Colonic mucosa (tissue), 4 donors: ENCODE measurements at regions of chr1 and their contacts with region 1.

Region 1: DNA sequence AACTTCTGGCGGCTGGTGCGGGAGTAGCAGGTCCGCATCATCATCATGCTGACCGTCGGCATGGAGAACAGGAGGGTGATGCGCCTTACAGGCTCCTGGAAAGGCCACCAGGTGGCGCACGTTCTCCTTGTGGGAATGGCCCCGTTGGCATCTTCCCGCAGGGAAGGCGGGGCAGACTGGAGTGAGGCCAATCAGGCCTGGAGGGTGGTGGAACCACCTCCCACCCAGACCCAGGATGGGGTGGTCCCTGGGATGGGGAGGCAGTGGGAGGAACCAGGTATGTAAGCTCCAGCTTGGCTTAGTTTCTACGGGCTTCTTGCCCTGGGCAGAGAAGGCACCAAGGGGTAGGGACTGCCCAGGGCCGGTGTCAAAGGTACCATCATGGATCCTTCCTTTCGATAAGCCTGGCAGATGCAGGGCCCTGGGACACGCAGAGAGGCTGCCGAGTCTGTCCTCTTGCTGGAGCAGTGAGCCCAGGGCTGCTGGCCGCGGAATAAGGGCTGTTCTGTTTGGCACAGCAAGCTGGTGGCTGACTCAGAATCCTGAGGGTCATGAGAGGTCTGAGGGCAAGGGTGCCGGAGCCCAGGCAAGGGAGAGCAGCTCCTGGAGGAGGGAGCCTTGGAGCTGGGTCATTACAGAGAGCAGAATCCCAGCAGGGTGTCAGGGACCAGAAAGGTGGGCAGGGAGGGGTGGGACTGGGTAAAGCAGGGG is 8.7 kb upstream of the LGR6 start:
- DNase-seq: peak; percentile 89
- H3K4me3 ChIP-seq: no peak overlapping the region
- H3K27ac ChIP-seq: no peak overlapping the region
- H3K4me1 ChIP-seq: no peaks in the 10 kb centered on the region
- H3K27me3 ChIP-seq: no peaks in the 10 kb centered on the region
- CTCF ChIP-seq: peak; percentile 89

Region 2: DNA sequence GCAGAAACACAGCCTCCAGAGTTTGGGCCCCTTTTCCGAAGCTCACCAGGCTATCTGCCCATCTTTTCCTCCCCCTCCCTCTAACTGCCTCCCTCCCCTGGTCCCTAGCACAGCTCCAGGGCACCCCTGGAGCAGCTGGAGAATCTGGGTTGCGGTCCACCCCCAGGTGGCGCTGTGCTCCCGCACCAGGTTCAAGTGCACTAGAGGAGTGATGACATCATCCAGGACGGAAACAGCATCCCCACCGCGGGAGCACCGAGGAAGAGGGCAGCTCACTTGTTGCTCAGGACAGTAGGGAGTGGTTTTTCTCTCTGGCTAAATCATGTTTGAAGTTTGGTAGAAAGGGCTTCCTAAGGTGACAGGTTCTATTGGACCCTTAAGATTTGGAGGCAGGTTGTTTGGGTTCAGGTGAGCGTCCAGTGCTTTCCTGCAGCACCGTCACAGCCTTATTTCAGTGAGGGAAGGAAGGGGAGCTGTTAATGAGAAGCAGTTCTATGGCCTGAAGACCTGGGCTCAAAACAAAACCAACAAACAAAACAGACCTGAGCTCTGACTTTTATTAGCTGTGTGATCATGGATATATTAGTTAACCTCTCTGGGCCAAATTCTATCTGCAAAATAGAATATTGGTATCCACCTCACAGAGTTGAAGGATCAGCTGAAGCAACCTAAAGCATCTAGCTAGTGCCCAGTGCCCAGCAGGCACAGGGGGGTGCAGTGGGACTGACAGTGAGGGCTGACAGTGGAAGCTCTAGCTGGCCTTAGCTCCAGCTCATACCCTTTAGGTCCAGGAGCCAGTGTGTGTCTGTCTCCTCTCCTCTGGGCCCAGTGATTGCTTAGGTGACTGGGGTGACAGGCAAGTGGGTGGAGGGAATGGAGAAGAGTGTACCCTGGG is 288.7 kb before region 1 on chr1:
- intact Hi-C with region 1: no loop called
- DNase-seq: peak; percentile 92
- H3K4me3 ChIP-seq: no peak overlapping the region
- H3K27ac ChIP-seq: no peak overlapping the region
- H3K4me1 ChIP-seq: no peaks in the 10 kb centered on the region
- H3K27me3 ChIP-seq: no peaks in the 10 kb centered on the region
- CTCF ChIP-seq: peak; percentile 89

Region 3: DNA sequence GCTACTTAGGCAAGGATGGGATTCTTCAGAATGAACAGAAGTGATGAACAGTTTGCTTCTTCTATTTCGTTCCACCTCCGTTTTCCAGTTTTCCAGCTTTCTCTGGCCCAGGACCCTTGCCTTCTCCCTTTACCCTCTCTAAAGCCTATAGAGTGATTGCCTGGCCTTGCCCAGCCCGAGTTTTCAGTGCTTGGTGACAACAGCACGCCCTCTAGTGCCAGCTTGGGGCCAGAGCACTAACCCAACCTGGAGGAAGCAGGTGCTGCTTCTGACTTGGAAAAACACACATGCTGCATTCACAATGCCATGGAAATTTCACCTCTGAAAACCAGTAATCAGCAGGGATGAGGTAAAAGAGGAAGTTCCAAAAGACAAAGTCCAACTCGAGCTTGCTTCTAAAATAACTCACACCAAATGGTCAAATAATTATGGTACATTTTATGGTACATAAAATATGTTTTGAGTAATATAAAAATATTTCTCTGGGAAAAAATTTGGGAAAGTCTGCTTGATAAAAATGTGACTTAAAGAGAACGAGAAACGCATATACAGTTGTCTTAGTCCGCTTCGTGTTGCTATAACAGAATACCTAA is 130.8 kb after region 1 on chr1:
- intact Hi-C with region 1: loop called (anchors 2 kb)
- DNase-seq: peak; percentile 82
- H3K4me3 ChIP-seq: no peak overlapping the region
- H3K27ac ChIP-seq: no peak overlapping the region
- H3K4me1 ChIP-seq: no peaks in the 10 kb centered on the region
- H3K27me3 ChIP-seq: no peaks in the 10 kb centered on the region
- CTCF ChIP-seq: peak; percentile 81

Region 4: GRCh38 chr1:202716654-202717053 is 531.7 kb after region 1 on chr1:
- intact Hi-C with region 1: loop called (anchors 5 kb)
- DNase-seq: no peak
- H3K4me3 ChIP-seq: no peak overlapping the region
- H3K27ac ChIP-seq: no peak overlapping the region
- H3K4me1 ChIP-seq: no peaks in the 10 kb centered on the region
- H3K27me3 ChIP-seq: no peaks in the 10 kb centered on the region
- CTCF ChIP-seq: no peak